Lower lobe of right lung (tissue), 2 donors: ENCODE measurements at regions of chr9 and their contacts with region 1.

Region 1: DNA sequence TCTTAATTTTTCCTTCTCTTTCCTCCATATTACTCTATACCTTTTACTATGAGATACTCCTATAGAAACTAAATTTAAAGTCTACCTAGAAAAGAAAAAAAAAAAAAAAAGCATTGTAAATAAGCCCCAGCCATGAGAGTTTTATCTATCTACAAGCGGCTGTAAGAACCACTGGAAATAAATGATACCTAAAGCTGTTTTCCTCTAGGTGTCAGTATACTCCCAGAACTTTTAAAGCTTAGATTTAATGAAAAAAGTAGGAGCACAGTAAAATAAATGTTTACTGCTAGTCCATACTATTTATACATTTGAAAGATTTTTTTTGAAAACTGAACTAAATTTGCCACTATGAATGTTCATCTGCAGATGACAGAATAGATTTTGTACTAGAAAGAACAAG is 26.2 kb downstream of the TYRP1 start:
- DNase-seq: no peak
- ATAC-seq: peak in 1 of 2 donors; percentile 65
- H3K4me3 ChIP-seq: no peak overlapping the region
- H3K27ac ChIP-seq: no peak overlapping the region
- H3K4me1 ChIP-seq: no peaks in the 10 kb centered on the region
- H3K27me3 ChIP-seq: no peaks in the 10 kb centered on the region
- CTCF ChIP-seq: peak; percentile 49

Region 2: DNA sequence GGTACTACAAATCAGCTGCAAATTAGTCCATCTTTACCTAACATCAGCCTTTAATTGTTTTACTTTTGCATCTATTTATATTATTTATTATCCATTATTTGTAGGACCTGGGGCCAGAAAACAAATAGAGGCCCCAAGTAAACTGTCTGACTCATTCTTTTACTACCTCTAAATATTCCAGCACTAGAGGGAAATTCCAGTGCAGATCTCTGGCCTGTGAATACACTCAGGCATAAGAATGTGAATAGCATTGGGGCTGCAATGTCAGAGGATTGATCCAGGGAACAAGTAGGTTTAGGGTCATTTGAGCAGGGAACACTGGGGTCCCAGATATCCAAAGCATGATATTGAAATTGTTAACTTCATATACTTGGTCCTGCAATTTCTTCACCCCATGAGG is 202.9 kb before region 1 on chr9:
- intact Hi-C with region 1: no loop called
- DNase-seq: no peak
- ATAC-seq: no peak
- H3K4me3 ChIP-seq: no peak overlapping the region
- H3K27ac ChIP-seq: no peak overlapping the region
- H3K4me1 ChIP-seq: no peaks in the 10 kb centered on the region
- H3K27me3 ChIP-seq: no peaks in the 10 kb centered on the region
- CTCF ChIP-seq: no peak

Region 3: DNA sequence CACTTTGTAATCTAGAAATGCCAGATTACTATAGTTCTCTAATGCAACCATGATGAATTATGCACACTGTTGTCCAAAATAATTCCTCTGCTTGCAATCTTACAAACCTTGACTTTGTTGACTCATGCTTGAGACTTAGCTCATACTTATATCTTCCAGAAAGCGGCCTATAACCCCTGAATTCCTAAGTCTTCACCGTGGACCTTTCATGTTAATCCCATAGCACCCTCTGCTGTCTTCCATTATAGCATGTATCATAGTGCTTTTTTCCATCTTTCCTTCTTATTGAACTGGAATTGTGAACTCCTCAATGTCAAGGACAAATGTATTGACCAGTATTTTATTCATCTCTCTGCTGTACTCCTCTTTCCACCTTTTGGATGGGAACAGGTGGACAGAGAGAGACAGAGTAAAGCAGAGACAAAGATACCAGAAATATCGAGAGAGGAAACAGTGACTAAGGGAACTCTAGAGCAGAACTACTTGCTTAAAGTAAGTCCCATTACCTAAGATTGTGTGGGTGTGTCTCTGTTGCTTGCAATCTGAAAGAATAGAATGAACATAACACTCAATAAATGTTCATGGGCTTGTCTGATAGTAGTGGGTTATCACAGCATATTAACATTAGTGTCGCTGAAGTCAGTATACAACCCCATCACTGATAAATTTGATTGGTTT is 165.4 kb after region 1 on chr9:
- intact Hi-C with region 1: loop called (anchors 10 kb)
- DNase-seq: no peak
- ATAC-seq: peak; percentile 66 to 87
- H3K4me3 ChIP-seq: no peak overlapping the region
- H3K27ac ChIP-seq: no peak overlapping the region
- H3K4me1 ChIP-seq: no peaks in the 10 kb centered on the region
- H3K27me3 ChIP-seq: no peaks in the 10 kb centered on the region
- CTCF ChIP-seq: peak; percentile 51

Region 4: GRCh38 chr9:13090628-13091027 is 371.2 kb after region 1 on chr9:
- intact Hi-C with region 1: loop called (anchors 10 kb)
- DNase-seq: no peak
- ATAC-seq: no peak
- H3K4me3 ChIP-seq: no peak overlapping the region
- H3K27ac ChIP-seq: no peak overlapping the region
- H3K4me1 ChIP-seq: no peaks in the 10 kb centered on the region
- H3K27me3 ChIP-seq: no peaks in the 10 kb centered on the region
- CTCF ChIP-seq: no peak